ENCODE measurements at regions of chr12 and their contacts with region 1.

Region 1: GRCh38 chr12:110449799-110450497 is at the start of gene ARPC3:
- DNase-seq: peak; percentile 86 to 95 (median 94)
- ATAC-seq: peak; percentile 98
- H3K4me3 ChIP-seq: peak within 1 kb of the TSS; percentile 95
- H3K4me3 Mint-ChIP-seq: peak within 1 kb of the TSS; percentile 90 to 100 (median 99)
- H3K27ac ChIP-seq: peak within 1 kb of the TSS; percentile 93
- H3K27ac Mint-ChIP-seq: peak within 1 kb of the TSS; percentile 94 to 100 (median 99)
- H3K4me1 ChIP-seq: peaks cover 20 to 22% of the 10 kb centered on the region in 2 donors
- H3K4me1 Mint-ChIP-seq: peaks cover 31 to 51% (median 44%) of the 10 kb centered on the region in 7 donors
- H3K27me3 ChIP-seq: no peaks in the 10 kb centered on the region
- H3K27me3 Mint-ChIP-seq: peaks cover 0 to 3% (median 0%) of the 10 kb centered on the region in 5 donors
- total RNA-seq, gene ARPC3: 166 to 381 (median 187) TPM

Region 2: DNA sequence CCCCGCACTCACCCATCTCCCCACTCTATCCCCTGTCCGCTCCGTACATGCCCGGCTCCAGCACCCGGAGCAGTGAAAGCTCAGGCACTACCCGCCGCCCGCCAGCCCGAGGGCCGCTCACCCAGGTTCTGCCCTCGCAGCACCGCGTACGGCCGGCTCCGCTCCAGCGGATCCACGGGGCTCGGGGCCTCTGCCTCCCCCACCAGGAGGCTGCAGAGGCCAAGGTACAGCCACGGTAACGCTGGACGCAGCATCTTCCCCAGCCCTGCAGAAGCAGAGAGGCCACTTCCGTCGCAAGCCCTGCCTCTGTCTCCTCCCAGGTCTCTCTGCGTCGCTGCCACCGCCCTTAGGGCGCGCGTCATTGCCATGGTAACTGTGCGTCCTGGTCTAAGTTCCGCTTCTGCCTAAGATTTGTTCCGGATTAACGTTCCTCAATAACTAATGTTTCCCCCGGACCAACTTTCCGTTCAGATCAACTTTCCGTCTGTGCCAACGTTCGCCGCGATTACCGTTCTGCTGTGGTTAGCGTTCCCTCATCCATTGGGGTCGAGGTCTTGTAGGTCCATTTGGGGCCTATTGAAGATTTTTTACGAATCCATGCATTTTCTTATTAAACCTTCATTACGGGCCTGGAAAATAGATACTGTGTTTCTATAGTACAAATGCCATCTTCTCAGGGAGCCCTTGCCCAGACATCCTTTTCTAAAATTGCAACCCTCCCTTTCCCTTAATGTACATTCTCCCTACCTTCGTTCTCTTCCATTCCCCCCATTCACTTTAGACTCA is 401.5 kb before region 1 on chr12 and contains the start of gene C12orf76:
- CTCF ChIA-PET with region 1: no interaction called
- POLR2A ChIA-PET with region 1: no interaction called
- intact Hi-C with region 1: loop called in 1 of 2 experiments (anchors 2 kb)
- DNase-seq: peak; percentile 67 to 92 (median 90)
- ATAC-seq: peak; percentile 100
- H3K4me3 ChIP-seq: peak within 1 kb of the TSS; percentile 81
- H3K4me3 Mint-ChIP-seq: peak within 1 kb of the TSS; percentile 84 to 97 (median 93)
- H3K27ac ChIP-seq: peak within 1 kb of the TSS; percentile 77
- H3K27ac Mint-ChIP-seq: peak within 1 kb of the TSS; percentile 90 to 99 (median 96)
- H3K4me1 ChIP-seq: peaks cover 19% of the 10 kb centered on the region in 2 donors
- H3K4me1 Mint-ChIP-seq: peaks cover 16 to 46% (median 34%) of the 10 kb centered on the region in 7 donors
- H3K27me3 ChIP-seq: no peaks in the 10 kb centered on the region
- H3K27me3 Mint-ChIP-seq: no peaks in the 10 kb centered on the region
- total RNA-seq, gene C12orf76: 14.6 to 28.7 (median 27.8) TPM

Region 3: DNA sequence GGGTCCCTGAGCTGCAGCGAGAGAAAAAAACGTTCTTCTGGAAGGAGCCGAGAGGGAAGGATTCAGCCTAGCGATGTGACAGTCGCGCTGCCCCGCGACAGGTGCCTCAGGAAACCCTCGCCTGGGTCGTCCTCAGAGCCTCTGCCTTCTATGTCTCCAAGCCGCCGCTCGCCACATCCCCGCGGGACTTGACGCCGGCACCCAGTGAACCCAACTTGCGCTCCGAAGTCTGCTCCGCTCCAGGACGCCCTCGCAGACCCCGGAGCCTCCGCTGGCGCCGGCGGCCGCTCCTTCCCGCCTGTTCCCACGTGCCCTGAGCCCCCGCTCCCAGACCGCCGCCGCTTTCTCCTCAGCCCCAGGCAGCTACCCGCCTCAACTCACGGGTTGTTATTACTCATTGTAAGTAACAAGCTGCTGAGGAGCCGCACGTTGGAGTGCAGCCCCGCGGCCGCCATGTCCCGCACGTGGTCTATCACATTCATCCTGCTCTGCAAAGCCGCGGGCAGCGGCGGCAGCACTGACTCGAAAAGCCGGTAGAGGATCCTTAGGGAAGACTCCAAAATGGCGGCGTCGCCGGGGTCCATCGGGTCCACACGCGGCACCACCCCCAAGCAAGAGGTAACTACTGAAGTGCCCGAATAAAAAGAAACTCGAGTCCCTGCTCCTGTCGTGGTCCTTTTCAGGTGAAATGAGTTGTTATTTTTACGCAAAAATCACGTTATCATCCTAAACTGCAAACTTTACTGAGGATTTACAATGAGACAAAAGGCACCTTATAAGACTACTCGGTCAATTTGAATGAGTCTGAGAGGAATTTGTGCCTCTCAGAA is 46.6 kb before region 1 on chr12 and contains the start of gene ANAPC7:
- CTCF ChIA-PET with region 1: no interaction called
- POLR2A ChIA-PET with region 1: interaction called, 4 read pairs
- intact Hi-C with region 1: loop called (anchors 5 kb)
- DNase-seq: peak; percentile 74 to 90 (median 87)
- ATAC-seq: peak; percentile 98
- H3K4me3 ChIP-seq: peak within 1 kb of the TSS; percentile 99
- H3K4me3 Mint-ChIP-seq: peak within 1 kb of the TSS in 9 of 10 donors; percentile 96 to 100 (median 98)
- H3K27ac ChIP-seq: peak within 1 kb of the TSS; percentile 81
- H3K27ac Mint-ChIP-seq: peak within 1 kb of the TSS; percentile 97 to 100 (median 99)
- H3K4me1 ChIP-seq: peaks cover 6 to 15% of the 10 kb centered on the region in 2 donors
- H3K4me1 Mint-ChIP-seq: peaks cover 15 to 50% (median 29%) of the 10 kb centered on the region in 7 donors
- H3K27me3 ChIP-seq: no peaks in the 10 kb centered on the region
- H3K27me3 Mint-ChIP-seq: no peaks in the 10 kb centered on the region
- total RNA-seq, gene ANAPC7: 40.9 to 71.7 (median 59.7) TPM

Region 4: GRCh38 chr12:110501752-110502738 is 52.1 kb after region 1 on chr12 and contains the starts of genes RAD9B and VPS29:
- CTCF ChIA-PET with region 1: interaction called, 6 read pairs
- POLR2A ChIA-PET with region 1: interaction called, 9 read pairs
- intact Hi-C with region 1: loop called (anchors 1 kb)
- DNase-seq: peak; percentile 91 to 100 (median 99)
- ATAC-seq: peak; percentile 98
- H3K4me3 ChIP-seq: peak within 1 kb of the TSS; percentile 86
- H3K4me3 Mint-ChIP-seq: peak within 1 kb of the TSS; percentile 88 to 100 (median 97)
- H3K27ac ChIP-seq: peak within 1 kb of the TSS; percentile 89
- H3K27ac Mint-ChIP-seq: peak within 1 kb of the TSS; percentile 93 to 100 (median 97)
- H3K4me1 ChIP-seq: peaks cover 20 to 22% of the 10 kb centered on the region in 2 donors
- H3K4me1 Mint-ChIP-seq: peaks cover 22 to 52% (median 39%) of the 10 kb centered on the region in 7 donors
- H3K27me3 ChIP-seq: no peaks in the 10 kb centered on the region
- H3K27me3 Mint-ChIP-seq: peaks cover 0 to 3% (median 0%) of the 10 kb centered on the region in 5 donors
- total RNA-seq, gene RAD9B: 0.60 to 2.9 (median 1.1) TPM
- total RNA-seq, gene VPS29: 78.5 to 131 (median 115) TPM

Region 5: DNA sequence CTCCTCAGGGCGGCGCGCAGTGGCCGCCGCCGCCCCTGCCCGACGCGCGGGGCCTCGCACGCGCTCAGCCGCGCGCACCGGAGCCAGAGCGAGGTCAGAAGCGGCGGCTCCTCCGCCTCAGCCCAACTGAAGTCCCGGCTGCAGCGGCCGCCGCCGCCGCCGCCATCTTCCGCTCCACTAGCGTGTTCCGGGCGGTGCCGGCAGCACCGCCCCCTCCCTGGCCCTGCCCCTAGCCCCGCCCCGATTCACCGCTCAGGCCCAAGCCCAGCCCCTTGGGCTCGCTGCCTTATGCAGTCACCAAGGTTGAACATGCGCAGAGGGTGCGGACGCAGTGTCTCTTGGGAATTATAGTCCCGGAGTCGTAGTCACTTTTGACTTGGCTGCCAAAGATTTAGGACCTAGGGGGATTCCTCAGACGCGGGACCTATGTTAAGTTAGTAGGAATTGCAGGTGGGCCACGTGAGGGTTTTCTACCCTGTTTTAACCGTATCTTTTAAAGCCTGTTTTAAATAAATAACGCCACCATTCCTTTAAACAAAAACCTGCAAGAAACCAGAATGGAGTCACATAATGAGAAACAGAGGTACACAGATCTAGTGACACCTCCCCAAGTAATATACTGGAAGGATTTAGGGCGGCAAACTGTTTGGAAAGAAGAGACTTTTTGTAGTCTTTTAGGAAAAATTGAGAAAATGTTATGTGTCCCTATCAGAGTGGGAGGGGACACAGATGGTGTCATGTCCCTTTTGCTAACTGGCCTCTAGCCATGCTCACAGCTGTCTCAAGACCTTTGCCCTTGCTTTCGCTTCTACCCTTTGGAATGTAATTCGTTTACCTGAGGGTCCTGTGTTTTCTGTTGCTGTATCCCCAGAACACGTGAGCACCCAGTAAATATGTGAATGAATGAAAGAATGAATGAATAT is 133.4 kb after region 1 on chr12 and contains the start of gene PPTC7:
- CTCF ChIA-PET with region 1: interaction called, 4 read pairs
- POLR2A ChIA-PET with region 1: interaction called, 4 read pairs
- intact Hi-C with region 1: loop called in 1 of 2 experiments (anchors 1 kb)
- DNase-seq: peak; percentile 84 to 97 (median 93)
- ATAC-seq: peak; percentile 98
- H3K4me3 ChIP-seq: peak within 1 kb of the TSS; percentile 72
- H3K4me3 Mint-ChIP-seq: peak within 1 kb of the TSS; percentile 91 to 97 (median 95)
- H3K27ac ChIP-seq: peak within 1 kb of the TSS; percentile 97
- H3K27ac Mint-ChIP-seq: peak within 1 kb of the TSS; percentile 93 to 97 (median 95)
- H3K4me1 ChIP-seq: peaks cover 26 to 55% of the 10 kb centered on the region in 2 donors
- H3K4me1 Mint-ChIP-seq: peaks cover 53 to 74% (median 67%) of the 10 kb centered on the region in 7 donors
- H3K27me3 ChIP-seq: no peaks in the 10 kb centered on the region
- H3K27me3 Mint-ChIP-seq: no peaks in the 10 kb centered on the region
- total RNA-seq, gene PPTC7: 36.7 to 43.8 (median 38.8) TPM

Region 6: GRCh38 chr12:110826592-110827200 is 376.7 kb after region 1 on chr12:
- CTCF ChIA-PET with region 1: interaction called, 12 read pairs
- POLR2A ChIA-PET with region 1: interaction called, 3 read pairs
- intact Hi-C with region 1: loop called (anchors 1 to 2 kb)
- DNase-seq: peak; percentile 61 to 85 (median 77)
- ATAC-seq: peak; percentile 98
- H3K4me3 ChIP-seq: no peak overlapping the region
- H3K4me3 Mint-ChIP-seq: peak overlapping the region in 9 of 10 donors; percentile 35 to 75 (median 58)
- H3K27ac ChIP-seq: no peak overlapping the region
- H3K27ac Mint-ChIP-seq: peak overlapping the region in 8 of 9 donors; percentile 4 to 81 (median 20)
- H3K4me1 ChIP-seq: no peaks in the 10 kb centered on the region
- H3K4me1 Mint-ChIP-seq: peaks cover 0 to 10% (median 6%) of the 10 kb centered on the region in 7 donors
- H3K27me3 ChIP-seq: no peaks in the 10 kb centered on the region
- H3K27me3 Mint-ChIP-seq: peaks cover 0 to 4% (median 0%) of the 10 kb centered on the region in 5 donors